ENCODE measurements at regions of chr14 and their contacts with region 1.

Region 1: DNA sequence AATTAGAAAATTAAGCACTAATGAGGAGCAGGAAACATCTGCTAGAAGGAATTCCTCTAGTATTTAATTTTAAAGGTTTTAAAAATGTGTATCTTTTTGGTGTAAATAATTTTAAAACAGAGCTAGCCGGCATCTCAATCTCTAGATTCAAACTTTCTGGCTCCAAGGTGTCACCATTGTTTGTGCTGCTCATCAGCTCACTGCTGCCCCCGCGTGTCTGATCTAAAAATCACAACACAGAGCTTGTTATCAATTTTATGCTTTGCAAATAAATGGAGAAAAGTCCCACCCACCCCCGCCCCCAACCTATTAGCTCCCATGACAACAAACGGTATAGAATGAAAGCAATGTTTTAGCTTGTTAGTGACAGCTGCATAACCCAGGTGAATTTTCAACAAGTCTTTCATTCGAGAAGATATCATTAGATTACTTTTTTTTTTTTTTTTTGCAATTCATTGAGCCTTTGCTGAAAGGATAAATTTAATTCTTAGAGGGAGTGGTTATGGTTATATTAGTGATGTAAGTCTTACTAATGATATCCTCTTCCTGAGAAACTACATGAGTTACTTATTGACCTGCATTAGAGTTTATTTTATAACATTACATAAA is 11.3 kb upstream of the ABHD12B start:
- DNase-seq: peak; percentile 42
- ATAC-seq: peak; percentile 71; the same call in 1 of the 2 replicates
- H3K4me3 ChIP-seq: peak overlapping the region; percentile 47 to 75
- H3K27ac ChIP-seq: 0 out of 2 replicates have a peak overlapping the region, but pooled peaks have one; percentile 29
- H3K4me1 ChIP-seq: no peaks in the 10 kb centered on the region; the same call in 1 of the 2 replicates
- H3K27me3 ChIP-seq: peaks cover 2% of the 10 kb centered on the region; the same call in 1 of the 2 replicates
- CTCF ChIP-seq: peak; percentile 84

Region 2: DNA sequence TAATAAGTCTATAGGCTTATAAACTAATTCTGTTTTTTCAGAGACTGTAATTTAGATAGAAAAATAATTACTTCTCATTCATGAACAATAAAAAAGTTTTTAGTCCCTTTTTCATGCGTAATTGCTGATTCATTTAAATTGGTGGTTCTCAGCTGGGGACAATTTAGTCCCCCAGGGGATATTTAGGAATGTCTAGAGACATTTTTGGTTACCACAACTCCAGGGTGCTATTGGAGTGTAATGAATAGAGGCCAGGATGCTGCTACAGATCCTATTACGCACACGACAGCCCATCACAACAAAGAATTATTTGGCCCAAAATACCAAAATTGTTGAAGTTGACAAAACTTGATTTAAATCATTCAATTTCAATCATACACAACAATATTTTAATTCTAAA is 721.4 kb before region 1 on chr14:
- CTCF ChIA-PET with region 1: interaction called, 13 read pairs
- POLR2A ChIA-PET with region 1: no interaction called
- in situ Hi-C with region 1: no loop called
- intact Hi-C with region 1: no loop called
- DNase-seq: no peak
- ATAC-seq: no peak
- H3K4me3 ChIP-seq: no peak overlapping the region
- H3K27ac ChIP-seq: no peak overlapping the region
- H3K4me1 ChIP-seq: no peaks in the 10 kb centered on the region
- H3K27me3 ChIP-seq: no peaks in the 10 kb centered on the region
- CTCF ChIP-seq: no peak

Region 3: DNA sequence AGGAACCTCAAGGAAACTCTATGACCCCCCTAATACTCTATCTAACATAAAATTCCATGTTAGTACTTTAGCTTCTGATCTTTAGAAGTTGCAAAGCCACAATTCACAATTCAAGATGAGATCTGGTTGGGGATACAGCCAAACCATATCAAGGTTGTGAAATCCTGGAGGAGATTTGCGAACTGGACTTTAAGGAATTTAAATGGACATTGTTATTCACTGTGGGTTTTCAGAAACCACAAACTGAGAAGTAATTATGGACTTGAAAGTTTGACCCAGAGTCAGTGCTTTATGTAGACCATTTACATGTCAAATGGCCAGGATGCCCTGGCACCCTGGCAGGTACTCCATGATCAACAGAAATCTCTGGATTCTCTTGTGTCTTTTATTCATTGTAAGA is 449.7 kb before region 1 on chr14:
- CTCF ChIA-PET with region 1: no interaction called
- POLR2A ChIA-PET with region 1: no interaction called
- in situ Hi-C with region 1: no loop called
- intact Hi-C with region 1: no loop called
- DNase-seq: no peak
- ATAC-seq: no peak
- H3K4me3 ChIP-seq: no peak overlapping the region
- H3K27ac ChIP-seq: no peak overlapping the region
- H3K4me1 ChIP-seq: no peaks in the 10 kb centered on the region
- H3K27me3 ChIP-seq: no peaks in the 10 kb centered on the region
- CTCF ChIP-seq: no peak

Region 4: DNA sequence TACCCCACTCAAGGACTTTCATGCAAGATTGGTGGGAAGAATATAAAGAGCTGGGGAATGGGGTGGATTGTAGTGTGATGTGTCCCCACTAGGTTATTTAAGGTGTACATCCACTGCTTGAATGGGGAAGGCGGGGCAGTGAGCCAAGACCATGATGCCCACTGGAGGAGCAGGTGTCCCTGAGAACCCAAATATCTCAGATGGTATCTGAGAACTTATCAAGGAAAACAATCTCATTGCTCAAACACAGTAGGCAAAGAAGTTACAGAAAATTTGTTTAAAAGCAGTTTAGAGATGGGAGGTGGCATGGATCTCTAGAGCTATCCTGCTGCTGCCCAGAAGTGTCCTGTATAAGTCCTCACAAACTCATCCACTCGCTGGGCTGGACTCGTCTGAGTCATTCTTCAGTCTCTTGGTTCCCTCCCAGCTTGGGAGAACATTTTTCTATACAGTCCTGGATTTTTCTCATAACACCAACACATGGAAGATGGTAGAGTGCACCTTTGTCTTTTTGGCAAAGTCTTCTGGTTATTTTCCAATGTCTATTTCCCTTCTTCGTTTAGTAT is 306.1 kb before region 1 on chr14:
- CTCF ChIA-PET with region 1: no interaction called
- POLR2A ChIA-PET with region 1: no interaction called
- in situ Hi-C with region 1: no loop called
- intact Hi-C with region 1: no loop called
- DNase-seq: no peak
- ATAC-seq: no peak
- H3K4me3 ChIP-seq: no peak overlapping the region
- H3K27ac ChIP-seq: no peak overlapping the region
- H3K4me1 ChIP-seq: no peaks in the 10 kb centered on the region
- H3K27me3 ChIP-seq: peaks cover 8% of the 10 kb centered on the region
- CTCF ChIP-seq: no peak

Region 5: GRCh38 chr14:50599700-50600444 is 260.7 kb before region 1 on chr14:
- CTCF ChIA-PET with region 1: interaction called, 6 read pairs
- POLR2A ChIA-PET with region 1: no interaction called
- in situ Hi-C with region 1: no loop called
- intact Hi-C with region 1: loop called (anchors 10 kb)
- DNase-seq: peak; percentile 20
- ATAC-seq: 0 out of 2 replicates have a peak, but pooled peaks have one; percentile 62
- H3K4me3 ChIP-seq: no peak overlapping the region
- H3K27ac ChIP-seq: no peak overlapping the region
- H3K4me1 ChIP-seq: no peaks in the 10 kb centered on the region
- H3K27me3 ChIP-seq: no peaks in the 10 kb centered on the region
- CTCF ChIP-seq: peak; percentile 62; the same call in 1 of the 2 replicates

Region 6: DNA sequence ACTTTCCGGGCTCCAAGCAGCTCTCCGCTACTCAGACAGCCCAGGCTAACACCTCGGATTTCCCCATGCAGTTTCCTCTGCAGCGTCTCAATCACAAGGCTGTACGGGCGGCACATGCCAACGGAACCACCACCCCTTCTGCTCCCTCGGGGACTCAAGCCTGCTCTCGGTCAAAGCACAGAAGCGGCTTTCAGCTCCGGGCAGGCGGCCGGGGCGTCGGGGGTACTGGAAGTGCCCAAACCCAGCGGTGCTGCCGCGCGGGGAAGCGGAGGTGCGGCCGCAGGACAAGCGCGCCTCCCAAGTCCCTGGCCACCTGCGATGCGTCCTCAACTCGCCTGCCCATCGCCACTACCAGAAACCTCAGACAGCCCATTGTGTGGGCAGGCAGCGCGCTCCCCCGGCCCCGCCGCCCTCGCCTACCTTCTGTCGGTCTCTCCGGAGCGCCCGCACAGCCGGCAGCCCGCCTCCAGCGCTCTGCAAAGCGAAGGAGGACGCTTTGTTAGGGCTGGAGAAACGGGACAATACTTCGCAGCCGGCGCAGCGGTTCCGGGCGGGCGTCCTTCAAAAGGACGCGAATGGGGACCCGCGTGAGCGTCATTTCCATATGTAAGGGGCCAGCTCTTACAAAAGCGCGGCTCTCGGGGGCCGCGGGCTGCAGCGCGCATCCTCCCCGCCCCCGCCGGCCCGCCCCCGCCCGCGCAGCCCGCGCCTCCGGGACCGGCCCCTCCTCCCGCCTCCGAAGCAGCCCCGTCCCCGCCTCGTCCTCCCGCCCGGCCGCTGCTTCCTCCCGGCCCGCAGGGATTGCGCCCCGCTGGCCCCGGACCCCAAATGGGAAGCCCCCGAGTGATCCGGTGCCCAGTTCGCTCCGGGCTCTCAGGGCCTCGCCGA is 30.3 kb before region 1 on chr14:
- CTCF ChIA-PET with region 1: interaction called, 11 read pairs
- POLR2A ChIA-PET with region 1: no interaction called
- in situ Hi-C with region 1: no loop called
- intact Hi-C with region 1: no loop called
- DNase-seq: no peak
- ATAC-seq: peak; percentile 70
- H3K4me3 ChIP-seq: peak overlapping the region; percentile 63 to 75
- H3K27ac ChIP-seq: no peak overlapping the region
- H3K4me1 ChIP-seq: peaks cover 3% of the 10 kb centered on the region; the same call in 1 of the 2 replicates
- H3K27me3 ChIP-seq: no peaks in the 10 kb centered on the region
- CTCF ChIP-seq: no peak

Region 7: GRCh38 chr14:50906326-50907065 is 45.9 kb after region 1 on chr14:
- CTCF ChIA-PET with region 1: no interaction called
- POLR2A ChIA-PET with region 1: no interaction called
- in situ Hi-C with region 1: no loop called
- intact Hi-C with region 1: no loop called
- DNase-seq: no peak
- ATAC-seq: no peak
- H3K4me3 ChIP-seq: no peak overlapping the region
- H3K27ac ChIP-seq: no peak overlapping the region
- H3K4me1 ChIP-seq: no peaks in the 10 kb centered on the region
- H3K27me3 ChIP-seq: no peaks in the 10 kb centered on the region
- CTCF ChIP-seq: no peak